Posterior vena cava (tissue), 2 donors: ENCODE measurements at regions of chr4 and their contacts with region 1.

Region 1: GRCh38 chr4:80184053-80184790 is 13.1 kb upstream of the PRDM8 start:
- DNase-seq: peak; percentile 97

Region 2: DNA sequence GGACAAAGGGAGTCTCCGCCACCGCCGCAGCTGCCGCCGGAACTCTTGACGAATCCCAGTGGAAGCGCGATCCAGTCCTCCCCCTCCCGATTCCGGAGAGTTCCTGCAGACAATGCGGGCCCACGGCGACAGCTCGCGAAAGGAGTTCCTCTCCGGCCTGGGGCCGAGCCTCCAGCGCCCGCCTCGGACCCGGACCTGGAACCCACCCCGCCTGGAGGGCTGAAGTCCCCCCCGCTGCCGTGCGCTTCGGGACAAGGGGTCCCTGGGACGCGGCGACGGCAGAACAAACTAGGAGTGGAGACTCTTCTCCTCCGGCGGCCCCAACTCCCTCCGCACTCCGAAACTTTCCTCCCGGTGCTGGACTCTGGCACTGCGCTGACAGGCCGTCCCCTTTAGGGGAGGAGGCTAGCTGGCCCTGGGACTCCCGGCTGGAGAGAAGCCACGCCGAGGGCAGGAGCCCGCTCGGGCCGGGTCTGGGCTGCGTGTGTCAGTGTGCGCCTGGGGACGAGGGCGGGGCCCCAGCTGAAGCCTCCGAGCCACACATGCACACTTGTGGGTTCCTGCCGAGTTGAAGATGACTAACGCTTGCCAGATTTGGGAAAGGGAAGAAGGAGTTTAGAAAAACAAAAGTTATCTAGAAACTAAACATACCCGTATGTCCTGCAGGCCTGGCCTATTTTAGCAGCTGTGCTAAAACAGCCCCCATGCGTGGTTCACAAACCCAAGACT is 111.3 kb before region 1 on chr4 and contains the start of gene ANTXR2:
- intact Hi-C with region 1: loop called in 1 of 2 experiments (anchors 10 kb)
- DNase-seq: peak; percentile 98
- total RNA-seq, gene ANTXR2: 111 to 164 TPM

Region 3: DNA sequence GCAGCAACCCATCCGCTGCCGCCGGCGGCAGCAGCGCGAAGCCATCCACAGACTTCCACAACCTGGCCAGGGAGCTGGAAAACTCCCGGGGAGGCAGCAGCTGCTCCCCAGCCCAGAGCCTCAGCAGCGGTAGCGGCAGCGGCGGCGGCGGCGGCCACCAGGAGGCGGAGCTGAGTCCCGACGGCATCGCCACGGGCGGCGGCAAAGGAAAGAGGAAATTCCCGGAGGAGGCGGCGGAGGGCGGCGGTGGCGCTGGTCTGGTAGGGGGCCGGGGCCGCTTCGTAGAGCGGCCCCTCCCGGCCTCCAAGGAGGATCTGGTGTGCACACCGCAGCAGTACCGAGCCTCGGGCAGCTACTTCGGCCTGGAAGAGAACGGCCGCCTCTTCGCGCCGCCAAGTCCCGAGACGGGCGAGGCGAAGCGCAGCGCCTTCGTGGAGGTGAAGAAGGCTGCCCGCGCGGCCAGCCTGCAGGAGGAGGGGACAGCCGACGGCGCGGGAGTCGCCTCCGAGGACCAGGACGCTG is 18.0 kb after region 1 on chr4:
- intact Hi-C with region 1: loop called in 1 of 2 experiments (anchors 1 kb)
- DNase-seq: peak; percentile 96